ENCODE measurements at regions of chr11 and their contacts with region 1.

Region 1: DNA sequence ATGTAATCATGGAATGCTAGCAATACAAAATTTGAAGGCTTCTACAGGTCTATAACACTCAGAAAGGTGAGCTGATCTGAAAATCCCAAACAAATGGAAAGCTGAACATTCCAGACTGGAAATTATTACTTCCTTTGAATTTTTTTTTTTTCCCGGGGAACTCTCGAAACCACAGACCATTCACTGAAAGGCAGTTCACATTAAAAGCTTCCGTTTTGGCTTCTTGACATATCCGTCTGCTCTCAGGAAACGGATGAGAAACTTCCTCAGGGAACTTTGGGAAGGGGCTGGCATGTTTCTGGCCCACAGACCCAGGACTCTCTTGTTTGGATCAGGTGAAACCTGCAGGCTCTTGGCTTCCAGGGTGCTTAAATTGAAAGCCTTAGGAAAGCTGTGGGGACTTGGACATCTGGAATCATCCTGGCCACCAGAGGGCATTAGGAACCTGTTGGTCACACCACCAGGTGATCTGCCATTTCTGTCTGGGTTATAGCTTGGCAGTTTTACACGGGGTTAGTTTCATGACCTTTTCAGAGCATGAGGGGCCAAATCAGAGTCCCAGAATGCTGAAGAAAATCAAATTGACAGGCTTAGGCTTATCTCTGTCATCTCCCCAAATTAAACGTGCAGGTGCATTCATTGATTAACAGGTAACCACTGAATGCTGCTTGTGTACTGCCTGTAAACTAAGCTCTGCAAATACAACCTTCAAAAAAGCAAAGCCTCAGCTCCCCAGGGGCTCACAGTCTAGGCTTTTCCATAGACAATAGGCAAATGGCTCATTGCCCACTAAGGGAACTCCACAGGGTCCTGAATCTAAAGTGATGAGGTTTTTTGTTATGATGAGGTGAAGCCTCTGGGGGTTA is 22.7 kb upstream of the GRAMD1B start:
- DNase-seq: peak; percentile 81
- H3K4me3 Mint-ChIP-seq: no peak overlapping the region
- H3K27ac Mint-ChIP-seq: no peak overlapping the region
- H3K4me1 Mint-ChIP-seq: no peaks in the 10 kb centered on the region
- H3K27me3 Mint-ChIP-seq: peaks cover 50% of the 10 kb centered on the region
- CTCF ChIP-seq: peak; percentile 76

Region 2: DNA sequence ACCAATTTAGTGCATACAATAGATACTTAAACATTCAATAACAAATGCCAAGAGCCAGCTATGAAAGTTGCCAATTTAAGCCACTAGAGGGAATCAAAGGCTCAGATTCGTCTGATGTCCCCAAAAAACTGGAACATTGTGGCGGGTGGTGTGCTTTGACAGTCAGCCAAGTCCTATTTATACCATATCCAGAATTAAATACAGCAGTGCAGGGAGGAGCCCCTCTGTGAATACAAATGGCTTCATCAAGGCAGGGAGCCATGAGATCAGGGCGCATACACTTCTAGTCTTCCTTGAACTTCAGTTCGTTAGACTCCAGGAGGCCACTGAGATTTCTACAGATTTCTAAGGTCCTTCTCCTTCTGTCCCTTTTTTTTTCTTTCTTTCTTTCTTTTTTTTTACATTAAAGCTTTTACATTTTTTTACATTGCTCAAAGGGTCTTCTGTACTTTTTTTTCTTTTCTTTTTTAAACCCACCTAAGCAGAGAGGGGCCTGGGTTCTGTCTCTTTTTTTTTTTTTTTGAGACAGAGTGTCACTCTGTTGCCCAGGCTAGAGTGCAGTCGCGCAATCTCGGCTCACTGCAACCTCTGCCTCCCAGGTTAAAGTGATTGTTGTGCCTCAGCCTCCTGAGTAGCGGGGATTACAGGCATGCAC is 303.9 kb before region 1 on chr11:
- CTCF ChIA-PET with region 1: interaction called, 8 read pairs
- POLR2A ChIA-PET with region 1: no interaction called
- intact Hi-C with region 1: loop called (anchors 1 kb)
- DNase-seq: peak; percentile 69
- H3K4me3 Mint-ChIP-seq: no peak overlapping the region
- H3K27ac Mint-ChIP-seq: no peak overlapping the region
- H3K4me1 Mint-ChIP-seq: peaks cover 9% of the 10 kb centered on the region
- H3K27me3 Mint-ChIP-seq: no peaks in the 10 kb centered on the region
- CTCF ChIP-seq: peak; percentile 41

Region 3: GRCh38 chr11:123386796-123387510 is 20.4 kb before region 1 on chr11:
- CTCF ChIA-PET with region 1: interaction called, 15 read pairs
- POLR2A ChIA-PET with region 1: no interaction called
- intact Hi-C with region 1: no loop called
- DNase-seq: no peak
- H3K4me3 Mint-ChIP-seq: no peak overlapping the region
- H3K27ac Mint-ChIP-seq: no peak overlapping the region
- H3K4me1 Mint-ChIP-seq: no peaks in the 10 kb centered on the region
- H3K27me3 Mint-ChIP-seq: peaks cover 19% of the 10 kb centered on the region
- CTCF ChIP-seq: no peak

Region 4: GRCh38 chr11:123430721-123431497 is 23.5 kb after region 1 on chr11:
- CTCF ChIA-PET with region 1: interaction called, 25 read pairs
- POLR2A ChIA-PET with region 1: no interaction called
- intact Hi-C with region 1: no loop called
- DNase-seq: no peak
- H3K4me3 Mint-ChIP-seq: no peak overlapping the region
- H3K27ac Mint-ChIP-seq: no peak overlapping the region
- H3K4me1 Mint-ChIP-seq: no peaks in the 10 kb centered on the region
- H3K27me3 Mint-ChIP-seq: peaks cover 15% of the 10 kb centered on the region
- CTCF ChIP-seq: no peak

Region 5: DNA sequence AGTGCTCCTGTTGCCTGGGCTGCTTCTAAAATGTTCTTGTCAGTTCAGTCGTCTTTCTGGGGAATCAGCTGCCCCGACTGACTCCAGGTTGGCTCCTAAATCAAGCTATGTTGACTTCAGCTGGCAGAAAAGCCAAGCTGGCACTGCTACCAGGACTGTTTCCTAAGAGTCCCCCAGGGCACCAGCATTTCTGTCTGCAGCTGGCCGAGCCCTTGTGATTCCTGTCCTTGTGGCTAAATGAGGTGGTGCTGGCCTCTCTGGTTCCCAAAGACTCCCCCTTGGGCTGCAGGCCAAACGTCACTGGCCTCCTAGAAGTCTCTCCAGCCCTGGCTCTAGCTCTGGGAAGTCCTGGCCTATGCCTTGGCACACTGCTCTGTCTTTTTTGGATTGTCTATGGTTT is 53.8 kb after region 1 on chr11:
- CTCF ChIA-PET with region 1: interaction called, 17 read pairs
- POLR2A ChIA-PET with region 1: interaction called, 3 read pairs
- intact Hi-C with region 1: no loop called
- DNase-seq: peak; percentile 85
- H3K4me3 Mint-ChIP-seq: no peak overlapping the region
- H3K27ac Mint-ChIP-seq: no peak overlapping the region
- H3K4me1 Mint-ChIP-seq: no peaks in the 10 kb centered on the region
- H3K27me3 Mint-ChIP-seq: no peaks in the 10 kb centered on the region
- CTCF ChIP-seq: no peak

Region 6: GRCh38 chr11:123478352-123478987 is 71.1 kb after region 1 on chr11:
- CTCF ChIA-PET with region 1: interaction called, 376 read pairs
- POLR2A ChIA-PET with region 1: interaction called, 10 read pairs
- intact Hi-C with region 1: loop called (anchors 1 kb)
- DNase-seq: peak; percentile 71
- H3K4me3 Mint-ChIP-seq: no peak overlapping the region
- H3K27ac Mint-ChIP-seq: no peak overlapping the region
- H3K4me1 Mint-ChIP-seq: peaks cover 15% of the 10 kb centered on the region
- H3K27me3 Mint-ChIP-seq: no peaks in the 10 kb centered on the region
- CTCF ChIP-seq: peak; percentile 73

Region 7: GRCh38 chr11:123560006-123560405 is 152.6 kb after region 1 on chr11:
- CTCF ChIA-PET with region 1: interaction called, 10 read pairs
- POLR2A ChIA-PET with region 1: no interaction called
- intact Hi-C with region 1: loop called (anchors 1 kb)
- DNase-seq: no peak
- H3K4me3 Mint-ChIP-seq: no peak overlapping the region
- H3K27ac Mint-ChIP-seq: no peak overlapping the region
- H3K4me1 Mint-ChIP-seq: no peaks in the 10 kb centered on the region
- H3K27me3 Mint-ChIP-seq: peaks cover 70% of the 10 kb centered on the region
- CTCF ChIP-seq: no peak